ENCODE measurements at regions of chr10 and their contacts with region 1.

Region 1: DNA sequence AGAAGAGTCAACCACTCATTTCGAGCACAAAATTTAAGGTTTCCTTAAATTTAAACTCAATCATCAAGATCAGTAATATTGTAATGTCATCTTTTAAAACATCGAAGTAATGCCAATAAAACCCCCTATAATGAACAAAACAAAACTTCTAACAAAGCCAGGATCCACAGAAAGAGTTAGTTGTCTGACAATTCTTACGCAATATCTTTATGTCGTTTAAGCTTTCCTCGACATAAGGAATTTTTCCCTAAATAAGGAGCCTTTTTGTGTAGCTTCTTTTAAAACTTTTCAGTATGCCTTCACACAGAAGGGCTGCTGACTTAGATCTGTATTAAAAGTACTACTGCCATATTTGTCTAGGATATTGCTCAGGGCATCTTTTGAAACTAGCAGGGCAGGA is 7.5 kb downstream of the EBLN1 start:
- DNase-seq: no peak
- H3K4me3 ChIP-seq: no peak overlapping the region
- H3K27ac ChIP-seq: no peak overlapping the region
- H3K27me3 ChIP-seq: no peaks in the 10 kb centered on the region
- CTCF ChIP-seq: no peak

Region 2: DNA sequence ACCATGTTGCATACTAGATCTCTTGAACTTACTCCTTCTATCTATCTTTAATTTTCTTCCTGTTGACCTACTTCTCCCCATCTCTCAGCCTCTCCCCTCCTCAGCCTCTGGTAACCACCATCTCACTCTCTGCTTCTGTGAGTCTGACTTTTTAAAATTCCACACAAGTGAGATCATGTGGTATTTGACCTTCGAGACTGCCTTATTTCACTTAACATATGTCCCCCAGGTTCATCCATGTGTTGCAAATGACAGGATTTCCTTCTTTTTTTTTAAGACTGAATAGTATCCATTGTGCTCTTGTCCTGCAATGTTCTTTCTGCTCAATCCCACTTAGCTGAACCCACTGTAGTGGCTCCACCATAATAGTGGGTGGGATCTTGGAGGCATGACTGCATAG is 155.3 kb before region 1 on chr10:
- CTCF ChIA-PET with region 1: no interaction called
- POLR2A ChIA-PET with region 1: no interaction called
- DNase-seq: no peak
- H3K4me3 ChIP-seq: no peak overlapping the region
- H3K27ac ChIP-seq: no peak overlapping the region
- H3K27me3 ChIP-seq: no peaks in the 10 kb centered on the region
- CTCF ChIP-seq: no peak

Region 3: DNA sequence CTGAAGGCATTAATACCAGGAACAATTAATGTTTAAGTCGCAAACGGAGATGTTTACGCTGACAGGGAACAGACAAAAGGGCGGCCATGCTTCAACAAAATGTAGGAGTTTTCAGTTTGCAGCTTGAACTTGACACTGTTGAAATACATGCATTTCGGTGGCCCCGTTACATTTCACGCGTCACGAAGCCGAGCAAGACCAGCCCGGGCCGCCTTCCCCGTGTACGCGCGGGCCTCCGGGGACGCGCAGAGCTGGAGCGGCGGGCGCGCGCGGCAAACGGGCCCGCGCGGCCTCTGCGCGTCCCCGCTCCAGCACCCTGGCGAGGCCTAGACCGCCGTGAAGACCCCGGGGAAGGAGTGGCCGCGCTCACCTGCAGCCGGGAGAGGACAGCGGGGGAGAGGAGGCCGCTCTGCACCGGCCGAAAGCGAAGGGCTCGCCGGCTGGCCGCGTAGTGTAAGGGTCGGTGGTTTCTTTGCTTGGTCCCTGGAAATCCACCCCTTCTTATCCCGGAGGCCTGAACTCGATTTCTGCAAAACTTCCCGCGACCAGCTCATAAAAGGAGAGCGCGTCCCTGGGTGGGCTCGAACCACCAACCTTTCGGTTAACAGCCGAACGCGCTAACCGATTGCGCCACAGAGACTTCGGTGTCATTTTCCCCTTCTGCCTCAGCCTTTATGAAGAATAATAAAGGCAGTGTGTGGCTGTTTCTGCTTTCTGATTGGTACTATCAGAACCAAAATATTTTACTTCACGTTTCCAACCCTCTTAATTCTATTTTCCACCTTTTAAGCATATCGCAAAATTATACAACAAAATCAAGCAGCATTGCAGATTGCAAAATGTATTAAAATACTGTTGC is 18.9 kb after region 1 on chr10:
- CTCF ChIA-PET with region 1: interaction called, 10 read pairs
- POLR2A ChIA-PET with region 1: no interaction called
- DNase-seq: peak; percentile 78
- H3K4me3 ChIP-seq: peak overlapping the region; percentile 73
- H3K27ac ChIP-seq: peak overlapping the region; percentile 66
- H3K27me3 ChIP-seq: no peaks in the 10 kb centered on the region
- CTCF ChIP-seq: no peak

Region 4: DNA sequence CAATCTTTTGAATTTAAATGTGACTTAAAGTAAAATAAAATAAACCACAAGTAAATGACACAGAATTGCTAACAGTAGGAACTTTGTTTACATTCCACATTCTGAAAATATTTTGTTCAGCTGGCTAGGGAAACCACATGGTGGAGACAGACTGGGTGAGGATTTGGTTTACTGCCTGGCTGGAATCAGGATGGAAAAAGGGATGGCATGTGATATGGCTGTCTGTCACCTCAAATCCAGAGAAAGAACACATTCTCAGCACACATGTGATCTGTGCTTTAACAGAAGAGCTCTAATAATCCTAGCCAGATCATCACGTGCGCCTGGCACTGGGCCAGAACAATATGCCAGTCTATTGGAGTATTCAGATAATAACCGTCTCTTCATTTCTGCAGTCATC is 595.0 kb after region 1 on chr10:
- CTCF ChIA-PET with region 1: no interaction called
- POLR2A ChIA-PET with region 1: no interaction called
- DNase-seq: no peak
- H3K4me3 ChIP-seq: no peak overlapping the region
- H3K27ac ChIP-seq: no peak overlapping the region
- H3K27me3 ChIP-seq: no peaks in the 10 kb centered on the region
- CTCF ChIP-seq: 0 out of 2 replicates have a peak, but pooled peaks have one; percentile 12

Measured in AG04450 (cell line).